Naive thymus-derived CD4-positive, alpha-beta T cell (primary cell): ENCODE measurements at regions of chr18 and their contacts with region 1.

Region 1: GRCh38 chr18:74652392-74652988 is 54.8 kb downstream of the ZNF407 start:
- DNase-seq: peak in 7 of 9 donors; percentile 7 to 48 (median 36)
- ATAC-seq: no peak
- H3K4me3 ChIP-seq: no peak overlapping the region
- H3K4me3 Mint-ChIP-seq: no peak overlapping the region
- H3K27ac ChIP-seq: no peak overlapping the region
- H3K27ac Mint-ChIP-seq: no peak overlapping the region
- H3K4me1 ChIP-seq: no peaks in the 10 kb centered on the region
- H3K4me1 Mint-ChIP-seq: peaks cover 0 to 17% (median 5%) of the 10 kb centered on the region in 7 donors
- H3K27me3 ChIP-seq: no peaks in the 10 kb centered on the region
- H3K27me3 Mint-ChIP-seq: no peaks in the 10 kb centered on the region

Region 2: DNA sequence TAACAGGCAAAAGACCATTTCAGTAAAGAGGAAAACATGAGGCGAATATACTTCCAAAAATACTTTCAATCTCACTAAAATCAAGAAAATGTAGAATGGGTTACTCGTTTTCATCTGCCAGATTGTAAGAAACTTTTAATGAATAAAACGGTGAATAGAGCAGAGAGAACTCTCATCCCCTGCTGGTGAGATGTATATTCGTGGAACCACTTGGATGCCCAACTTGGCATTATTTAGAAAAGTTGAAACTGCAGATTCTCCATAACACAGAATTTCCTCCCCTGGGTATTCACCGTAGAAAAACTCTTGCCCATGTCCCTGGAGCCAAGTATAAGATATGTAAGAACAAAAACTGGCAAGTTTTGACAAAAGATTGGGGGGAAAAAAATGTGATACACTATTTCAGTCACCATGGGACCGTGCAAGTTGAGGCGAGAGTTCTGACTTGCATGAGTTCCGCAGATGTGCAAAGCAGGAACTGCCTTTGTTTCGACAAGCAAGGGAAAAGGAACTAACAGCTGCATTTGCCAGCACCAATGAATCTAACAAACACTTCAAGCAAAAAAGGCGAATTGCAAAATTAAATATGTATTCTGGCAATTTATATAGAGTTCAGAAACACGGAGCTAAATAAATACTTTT is 489.4 kb before region 1 on chr18:
- CTCF ChIA-PET with region 1: no interaction called
- POLR2A ChIA-PET with region 1: no interaction called
- intact Hi-C with region 1: no loop called
- DNase-seq: no peak
- ATAC-seq: no peak
- H3K4me3 ChIP-seq: no peak overlapping the region
- H3K4me3 Mint-ChIP-seq: no peak overlapping the region
- H3K27ac ChIP-seq: no peak overlapping the region
- H3K27ac Mint-ChIP-seq: peak overlapping the region in 2 of 9 donors; percentile 20 to 38
- H3K4me1 ChIP-seq: no peaks in the 10 kb centered on the region
- H3K4me1 Mint-ChIP-seq: peaks cover 0 to 1% (median 0%) of the 10 kb centered on the region in 7 donors
- H3K27me3 ChIP-seq: no peaks in the 10 kb centered on the region
- H3K27me3 Mint-ChIP-seq: peaks cover 0 to 3% (median 0%) of the 10 kb centered on the region in 5 donors

Region 3: GRCh38 chr18:74623047-74623816 is 29.3 kb before region 1 on chr18:
- CTCF ChIA-PET with region 1: interaction called, 5 read pairs
- POLR2A ChIA-PET with region 1: no interaction called
- intact Hi-C with region 1: loop called in 1 of 2 experiments (anchors 1 kb)
- DNase-seq: peak in 7 of 9 donors; percentile 16 to 62 (median 48)
- ATAC-seq: peak; percentile 52
- H3K4me3 ChIP-seq: no peak overlapping the region
- H3K4me3 Mint-ChIP-seq: no peak overlapping the region
- H3K27ac ChIP-seq: no peak overlapping the region
- H3K27ac Mint-ChIP-seq: no peak overlapping the region
- H3K4me1 ChIP-seq: peaks cover 3 to 9% of the 10 kb centered on the region in 2 donors
- H3K4me1 Mint-ChIP-seq: peaks cover 6 to 28% (median 13%) of the 10 kb centered on the region in 7 donors
- H3K27me3 ChIP-seq: no peaks in the 10 kb centered on the region
- H3K27me3 Mint-ChIP-seq: no peaks in the 10 kb centered on the region

Region 4: GRCh38 chr18:74963820-74964446 is 311.4 kb after region 1 on chr18:
- CTCF ChIA-PET with region 1: no interaction called
- POLR2A ChIA-PET with region 1: no interaction called
- intact Hi-C with region 1: loop called in 1 of 2 experiments (anchors 2 kb)
- DNase-seq: no peak
- ATAC-seq: peak; percentile 59
- H3K4me3 ChIP-seq: no peak overlapping the region
- H3K4me3 Mint-ChIP-seq: no peak overlapping the region
- H3K27ac ChIP-seq: no peak overlapping the region
- H3K27ac Mint-ChIP-seq: no peak overlapping the region
- H3K4me1 ChIP-seq: no peaks in the 10 kb centered on the region
- H3K4me1 Mint-ChIP-seq: peaks cover 0 to 8% (median 0%) of the 10 kb centered on the region in 7 donors
- H3K27me3 ChIP-seq: no peaks in the 10 kb centered on the region
- H3K27me3 Mint-ChIP-seq: no peaks in the 10 kb centered on the region

Region 5: GRCh38 chr18:75247611-75248421 is 595.3 kb after region 1 on chr18:
- CTCF ChIA-PET with region 1: interaction called, 3 read pairs
- POLR2A ChIA-PET with region 1: no interaction called
- intact Hi-C with region 1: loop called (anchors 1 to 10 kb)
- DNase-seq: peak in 7 of 9 donors; percentile 43 to 66 (median 58)
- ATAC-seq: peak; percentile 62
- H3K4me3 ChIP-seq: peak overlapping the region; percentile 43
- H3K4me3 Mint-ChIP-seq: peak overlapping the region; percentile 86 to 93 (median 90)
- H3K27ac ChIP-seq: peak overlapping the region; percentile 82
- H3K27ac Mint-ChIP-seq: peak overlapping the region; percentile 91 to 99 (median 96)
- H3K4me1 ChIP-seq: peaks cover 31 to 43% of the 10 kb centered on the region in 2 donors
- H3K4me1 Mint-ChIP-seq: peaks cover 44 to 94% (median 87%) of the 10 kb centered on the region in 7 donors
- H3K27me3 ChIP-seq: no peaks in the 10 kb centered on the region
- H3K27me3 Mint-ChIP-seq: no peaks in the 10 kb centered on the region

Region 6: DNA sequence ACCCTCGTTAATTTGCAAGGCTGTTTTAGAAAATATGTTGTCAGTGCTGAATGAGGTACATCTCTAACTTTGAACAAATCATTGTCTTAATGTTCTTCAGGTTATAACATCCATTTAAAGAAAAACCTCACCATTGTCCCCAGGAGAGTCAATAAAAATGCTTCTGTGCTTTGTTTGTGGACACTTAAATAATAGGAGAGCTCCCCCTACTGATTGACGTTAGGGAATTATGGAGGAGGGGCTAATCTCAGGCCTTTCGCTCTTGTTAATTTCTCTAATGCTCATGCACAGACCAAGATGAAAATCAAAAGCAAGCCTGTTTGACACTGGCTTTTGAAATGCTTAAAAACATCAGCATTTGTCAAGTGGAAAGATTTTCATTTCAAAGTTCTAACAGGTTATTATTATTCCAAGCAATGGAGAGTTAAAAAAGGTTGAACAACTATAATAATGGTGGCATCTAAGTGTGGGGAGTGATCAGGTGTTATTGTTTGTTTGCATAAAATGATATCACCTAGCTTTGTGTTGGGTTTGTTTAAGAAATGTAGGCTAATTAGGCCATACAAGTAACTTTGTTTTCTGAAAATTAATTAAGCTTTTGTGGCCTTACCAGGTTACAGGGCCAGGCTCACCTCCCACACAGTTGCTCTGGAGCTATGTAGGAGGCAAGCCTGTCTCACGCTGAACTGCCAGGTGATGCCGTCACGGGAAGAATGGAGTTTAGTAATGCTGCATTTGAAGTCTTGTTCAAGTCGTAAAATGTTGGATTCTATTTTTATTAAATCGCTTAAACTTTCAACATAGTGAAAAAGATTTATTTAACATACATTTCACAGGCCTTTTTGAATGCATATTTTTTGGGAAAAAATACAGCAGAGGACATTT is 826.7 kb after region 1 on chr18:
- CTCF ChIA-PET with region 1: interaction called, 7 read pairs
- POLR2A ChIA-PET with region 1: no interaction called
- intact Hi-C with region 1: loop called (anchors 1 kb)
- DNase-seq: peak in 6 of 9 donors; percentile 15 to 56 (median 49)
- ATAC-seq: peak; percentile 69
- H3K4me3 ChIP-seq: no peak overlapping the region
- H3K4me3 Mint-ChIP-seq: no peak overlapping the region
- H3K27ac ChIP-seq: no peak overlapping the region
- H3K27ac Mint-ChIP-seq: no peak overlapping the region
- H3K4me1 ChIP-seq: no peaks in the 10 kb centered on the region
- H3K4me1 Mint-ChIP-seq: peaks cover 0 to 10% (median 6%) of the 10 kb centered on the region in 7 donors
- H3K27me3 ChIP-seq: peaks cover 0 to 3% of the 10 kb centered on the region in 2 donors
- H3K27me3 Mint-ChIP-seq: peaks cover 9 to 19% (median 13%) of the 10 kb centered on the region in 5 donors

Region 7: DNA sequence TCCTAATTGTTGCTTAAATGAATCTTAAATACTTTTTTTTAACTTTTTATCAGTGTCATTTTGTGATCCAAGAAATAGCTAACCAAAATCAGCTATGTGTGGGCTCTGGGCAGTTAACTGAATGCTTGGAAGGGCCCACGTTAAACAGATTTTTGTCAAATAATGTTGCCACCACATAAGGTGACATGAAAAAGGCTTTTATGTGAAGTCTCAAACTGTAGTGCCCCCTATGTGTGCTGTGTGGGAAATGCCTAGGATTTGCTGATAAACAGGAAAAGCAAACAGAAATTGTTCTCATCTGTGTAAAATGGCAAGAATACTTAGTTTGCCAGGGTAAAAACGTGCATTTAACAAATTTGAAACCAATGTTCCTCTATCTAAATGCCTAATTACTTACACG is 1600.4 kb after region 1 on chr18:
- CTCF ChIA-PET with region 1: no interaction called
- POLR2A ChIA-PET with region 1: no interaction called
- intact Hi-C with region 1: loop called in 1 of 2 experiments (anchors 2 kb)
- DNase-seq: no peak
- ATAC-seq: no peak
- H3K4me3 ChIP-seq: no peak overlapping the region
- H3K4me3 Mint-ChIP-seq: no peak overlapping the region
- H3K27ac ChIP-seq: no peak overlapping the region
- H3K27ac Mint-ChIP-seq: no peak overlapping the region
- H3K4me1 ChIP-seq: no peaks in the 10 kb centered on the region
- H3K4me1 Mint-ChIP-seq: no peaks in the 10 kb centered on the region
- H3K27me3 ChIP-seq: no peaks in the 10 kb centered on the region
- H3K27me3 Mint-ChIP-seq: peaks cover 9 to 17% (median 10%) of the 10 kb centered on the region in 5 donors